Body of pancreas (tissue), 4 donors: ENCODE measurements at regions of chr11 and their contacts with region 1.

Region 1: GRCh38 chr11:102010771-102011494 is 36.3 kb upstream of the CFAP300 start:
- DNase-seq: peak in 2 of 4 donors; percentile 7 to 10
- ATAC-seq: no peak
- H3K4me3 ChIP-seq: no peak overlapping the region
- H3K27ac ChIP-seq: no peak overlapping the region
- H3K4me1 ChIP-seq: no peaks in the 10 kb centered on the region
- H3K27me3 ChIP-seq: no peaks in the 10 kb centered on the region
- CTCF ChIP-seq: no peak
- POLR2A ChIP-seq: no peak

Region 2: GRCh38 chr11:101860696-101861427 is 150.1 kb before region 1 on chr11:
- intact Hi-C with region 1: loop called (anchors 10 kb)
- DNase-seq: peak; percentile 33 to 43 (median 40)
- ATAC-seq: peak; percentile 82
- H3K4me3 ChIP-seq: no peak overlapping the region
- H3K27ac ChIP-seq: no peak overlapping the region
- H3K4me1 ChIP-seq: no peaks in the 10 kb centered on the region
- H3K27me3 ChIP-seq: no peaks in the 10 kb centered on the region
- CTCF ChIP-seq: peak; percentile 49 to 76 (median 66)
- POLR2A ChIP-seq: no peak